ENCODE measurements at regions of chr11 and their contacts with region 1.

Region 1: DNA sequence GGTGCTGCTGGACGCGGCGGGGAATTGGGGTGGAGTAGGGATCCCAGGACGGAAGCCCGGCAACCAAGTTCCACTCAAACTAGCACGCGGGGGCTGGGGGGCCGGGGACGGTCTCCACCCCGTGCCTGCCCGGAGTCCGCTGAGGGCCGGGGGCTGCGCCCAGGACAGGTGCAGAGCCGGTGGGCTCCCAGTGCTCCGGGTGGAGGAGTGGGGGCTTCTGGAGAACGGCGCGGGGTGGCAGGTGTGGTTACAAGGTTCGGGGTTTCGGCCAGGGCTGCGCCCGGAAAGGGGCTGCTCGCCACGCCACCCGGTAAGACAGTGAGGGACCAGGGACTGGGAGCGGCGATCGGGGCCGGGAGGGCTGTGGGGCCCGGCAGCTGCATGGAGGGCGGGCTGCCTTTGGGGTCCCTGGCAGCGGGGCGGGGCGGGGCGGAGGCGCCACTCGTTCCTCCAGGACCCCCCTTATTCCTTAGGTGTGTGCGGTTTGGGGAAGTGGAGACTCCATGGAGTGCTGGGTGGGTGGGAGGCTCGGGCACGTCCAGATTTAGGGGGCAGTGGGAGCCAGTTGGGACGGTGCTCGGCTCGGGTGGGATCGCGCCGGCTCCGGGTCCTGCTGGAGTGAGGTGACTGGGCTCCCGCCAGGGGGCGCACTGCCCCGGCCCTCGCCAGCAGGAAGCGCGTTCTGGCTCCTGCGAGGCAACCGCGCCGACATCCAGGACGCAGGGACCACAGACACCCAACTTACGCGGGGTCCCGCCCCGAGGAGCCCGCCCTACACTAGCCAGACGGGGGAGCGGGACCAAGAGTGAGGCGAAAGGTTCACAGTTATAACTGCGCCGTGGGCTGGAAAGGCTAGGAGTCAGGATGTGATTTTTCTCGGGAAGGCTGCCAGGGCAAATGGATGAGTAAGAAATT is 868 bp downstream of the TSPAN18 start:
- DNase-seq: peak; percentile 82
- H3K4me3 Mint-ChIP-seq: peak overlapping the region; percentile 82
- H3K27ac Mint-ChIP-seq: peak overlapping the region; percentile 72
- H3K4me1 Mint-ChIP-seq: peaks cover 51% of the 10 kb centered on the region
- H3K27me3 Mint-ChIP-seq: no peaks in the 10 kb centered on the region

Region 2: DNA sequence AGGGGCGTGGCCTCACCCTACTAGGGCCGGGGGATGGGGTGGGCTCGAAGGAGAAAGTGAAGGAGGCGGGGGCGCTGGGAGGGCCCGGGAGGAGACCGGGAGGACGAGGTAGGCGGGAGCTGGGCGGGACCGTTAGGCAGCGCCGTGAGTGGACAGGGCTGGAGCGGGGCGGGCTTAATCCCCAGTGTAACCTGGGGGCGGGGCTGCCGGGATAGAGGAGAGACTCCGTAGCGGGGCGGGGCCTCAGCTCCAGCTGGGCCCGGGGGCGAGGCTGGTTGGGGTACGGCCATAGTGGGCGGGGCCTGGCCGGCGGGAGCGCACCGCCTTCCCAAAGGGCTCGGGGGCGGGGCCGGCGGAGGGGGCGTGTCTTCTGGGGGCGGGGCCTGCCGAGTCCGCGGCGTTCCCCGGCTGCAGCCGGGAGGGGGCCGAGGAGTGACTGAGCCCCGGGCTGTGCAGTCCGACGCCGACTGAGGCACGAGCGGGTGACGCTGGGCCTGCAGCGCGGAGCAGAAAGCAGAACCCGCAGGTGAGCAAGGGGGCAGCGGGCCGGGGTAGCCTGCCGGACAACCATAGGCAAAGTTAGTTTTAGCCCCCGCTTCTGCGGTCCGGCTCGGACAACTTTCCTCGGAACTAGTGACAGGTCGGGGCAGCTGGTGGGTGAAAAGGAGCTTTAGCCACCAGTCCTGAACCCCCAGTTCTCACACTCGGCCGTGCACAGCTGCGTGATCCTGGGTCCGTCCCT is 162.2 kb before region 1 on chr11 and contains the start of gene CD82:
- CTCF ChIA-PET with region 1: no interaction called
- intact Hi-C with region 1: loop called (anchors 2 kb)
- DNase-seq: peak; percentile 99
- H3K4me3 Mint-ChIP-seq: peak within 1 kb of the TSS; percentile 83
- H3K27ac Mint-ChIP-seq: peak within 1 kb of the TSS; percentile 93
- H3K4me1 Mint-ChIP-seq: peaks cover 51% of the 10 kb centered on the region
- H3K27me3 Mint-ChIP-seq: no peaks in the 10 kb centered on the region
- total RNA-seq, gene CD82: 140 to 141 TPM

Region 3: DNA sequence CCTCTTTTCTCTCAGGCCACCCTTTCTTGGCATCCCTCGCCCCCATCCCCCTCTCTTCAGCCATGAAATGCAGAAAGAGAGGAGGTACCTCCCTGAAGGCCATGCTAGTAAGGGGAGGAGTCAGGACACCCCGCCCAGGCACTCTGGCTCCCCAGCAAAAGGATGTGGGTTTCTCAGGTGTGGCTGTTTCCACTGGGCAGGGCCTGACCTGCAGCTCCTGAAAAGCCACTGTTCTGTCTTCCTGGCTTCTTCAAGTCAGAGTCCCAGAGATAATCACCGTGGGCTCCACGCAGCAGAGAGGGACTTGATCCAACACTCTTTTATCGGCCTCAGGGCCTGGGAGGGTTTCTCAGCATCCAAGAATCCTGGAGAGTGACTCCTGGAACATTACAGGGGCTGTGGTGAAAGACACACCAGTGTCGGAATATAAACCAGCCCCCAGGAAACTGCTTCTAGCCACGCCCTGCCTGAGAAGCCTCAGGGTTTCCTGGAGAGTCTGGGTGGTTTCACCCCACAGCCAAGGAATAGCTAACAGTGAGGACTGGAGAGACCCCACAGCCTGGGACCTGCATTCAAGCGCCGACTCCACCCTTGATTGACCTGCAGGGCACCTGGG is 46.5 kb before region 1 on chr11:
- CTCF ChIA-PET with region 1: interaction called, 3 read pairs
- intact Hi-C with region 1: loop called (anchors 2 kb)
- DNase-seq: peak; percentile 86
- H3K4me3 Mint-ChIP-seq: peak overlapping the region; percentile 20
- H3K27ac Mint-ChIP-seq: peak overlapping the region; percentile 71
- H3K4me1 Mint-ChIP-seq: peaks cover 43% of the 10 kb centered on the region
- H3K27me3 Mint-ChIP-seq: no peaks in the 10 kb centered on the region

Region 4: GRCh38 chr11:44775366-44775984 is 47.8 kb after region 1 on chr11:
- CTCF ChIA-PET with region 1: interaction called, 23 read pairs
- intact Hi-C with region 1: loop called (anchors 1 kb)
- DNase-seq: peak; percentile 82
- H3K4me3 Mint-ChIP-seq: no peak overlapping the region
- H3K27ac Mint-ChIP-seq: no peak overlapping the region
- H3K4me1 Mint-ChIP-seq: peaks cover 7% of the 10 kb centered on the region
- H3K27me3 Mint-ChIP-seq: no peaks in the 10 kb centered on the region

Region 5: DNA sequence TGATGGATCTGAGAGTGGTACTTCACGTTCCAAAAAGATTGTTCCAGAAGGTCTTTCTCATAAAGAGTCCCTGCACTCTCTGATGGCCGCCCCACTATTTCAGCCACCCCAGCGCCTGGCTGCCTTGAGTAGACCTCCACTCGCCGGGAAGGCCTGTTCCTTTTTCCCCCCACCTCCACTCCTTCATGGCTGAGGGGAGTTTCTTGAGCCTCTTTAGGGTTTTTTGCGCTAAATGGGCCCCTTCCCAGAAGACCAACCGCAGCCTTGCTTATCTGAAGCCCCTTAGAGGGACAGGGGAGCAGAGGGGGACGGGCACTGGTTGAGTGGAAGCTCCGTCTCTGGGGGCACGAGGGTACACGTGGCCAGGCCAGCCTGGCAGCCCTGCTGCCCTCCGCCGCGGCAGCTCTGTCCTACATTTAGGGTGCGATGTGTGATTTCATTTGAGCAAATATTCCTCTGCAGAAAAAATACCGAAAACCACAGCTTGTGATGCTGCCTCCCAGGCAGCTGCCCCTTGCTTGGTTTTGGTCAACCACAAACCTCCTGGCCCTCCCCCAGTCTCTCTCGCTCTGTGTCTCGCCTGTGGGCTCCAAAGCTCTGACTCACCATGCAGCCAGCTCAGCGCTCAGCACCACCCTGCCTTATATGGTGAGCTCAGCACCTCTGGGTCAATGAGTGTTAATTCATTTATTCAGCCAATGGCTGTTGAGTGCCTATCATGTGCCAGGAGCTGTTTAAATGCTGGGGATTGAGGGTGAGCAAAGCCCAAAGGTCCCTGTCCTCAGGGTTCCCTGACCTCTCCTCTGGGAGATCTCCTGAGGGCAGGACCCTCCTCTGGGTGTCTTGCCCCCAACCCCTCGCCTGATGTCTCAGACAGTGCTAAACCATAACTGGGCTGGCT is 134.5 kb after region 1 on chr11:
- CTCF ChIA-PET with region 1: interaction called, 3 read pairs
- intact Hi-C with region 1: loop called (anchors 1 kb)
- DNase-seq: peak; percentile 91
- H3K4me3 Mint-ChIP-seq: no peak overlapping the region
- H3K27ac Mint-ChIP-seq: no peak overlapping the region
- H3K4me1 Mint-ChIP-seq: peaks cover 32% of the 10 kb centered on the region
- H3K27me3 Mint-ChIP-seq: no peaks in the 10 kb centered on the region

Region 6: DNA sequence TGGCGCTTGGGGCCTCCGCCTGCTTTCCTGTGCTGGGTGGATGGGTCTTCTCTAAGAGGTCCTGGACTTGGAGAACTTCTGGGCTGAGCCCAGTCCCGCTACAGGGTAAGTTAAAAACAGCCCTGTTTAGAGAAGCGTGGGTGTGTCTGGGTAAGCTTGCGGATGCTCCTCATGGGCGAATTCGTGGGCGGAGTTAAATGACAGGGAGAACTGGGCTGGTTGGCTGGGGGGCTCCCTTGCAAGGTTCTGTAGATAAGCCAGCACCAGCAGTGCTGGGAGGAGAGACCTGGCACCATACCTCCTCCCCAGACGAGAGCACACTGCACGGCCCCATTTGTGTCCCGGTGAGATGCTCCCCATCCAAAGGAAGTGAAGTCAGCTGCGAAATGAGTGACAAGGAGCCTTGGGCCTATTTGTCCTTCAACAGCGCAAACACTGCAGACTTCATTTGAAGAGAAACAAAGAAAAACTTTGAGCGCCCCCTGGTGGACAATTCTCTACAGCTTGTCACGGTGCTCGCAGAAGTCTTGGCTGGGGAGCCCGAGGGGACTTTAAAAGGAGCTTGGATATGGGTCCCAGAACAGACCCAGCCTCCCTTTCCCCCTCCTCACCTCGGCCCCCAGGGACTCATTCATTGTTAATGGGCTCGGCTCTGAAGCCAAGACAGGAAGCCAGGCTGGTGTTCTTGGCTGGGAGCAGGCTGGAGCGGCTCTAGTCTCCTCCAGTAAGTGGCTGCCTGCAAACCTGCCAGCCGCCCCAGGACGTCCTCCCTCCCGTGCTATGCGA is 183.6 kb after region 1 on chr11:
- CTCF ChIA-PET with region 1: interaction called, 7 read pairs
- intact Hi-C with region 1: loop called (anchors 1 kb)
- DNase-seq: peak; percentile 96
- H3K4me3 Mint-ChIP-seq: no peak overlapping the region
- H3K27ac Mint-ChIP-seq: no peak overlapping the region
- H3K4me1 Mint-ChIP-seq: peaks cover 3% of the 10 kb centered on the region
- H3K27me3 Mint-ChIP-seq: no peaks in the 10 kb centered on the region

Measured in activated naive CD4-positive, alpha-beta T cell treated with anti-CD3 and anti-CD28 coated beads for 36 hours (primary cell).